ENCODE measurements at regions of chr7 and their contacts with region 1.

Region 1: GRCh38 chr7:123865517-123866117 is 20.6 kb downstream of the HYAL4 start:
- DNase-seq: peak in 1 of 2 donors; percentile 70
- H3K4me3 ChIP-seq: no peak overlapping the region
- H3K27ac ChIP-seq: no peak overlapping the region
- H3K4me1 ChIP-seq: peaks cover 0 to 8% of the 10 kb centered on the region in 2 donors
- H3K27me3 ChIP-seq: no peaks in the 10 kb centered on the region
- CTCF ChIP-seq: peak; percentile 62 to 77 (median 75)

Region 2: DNA sequence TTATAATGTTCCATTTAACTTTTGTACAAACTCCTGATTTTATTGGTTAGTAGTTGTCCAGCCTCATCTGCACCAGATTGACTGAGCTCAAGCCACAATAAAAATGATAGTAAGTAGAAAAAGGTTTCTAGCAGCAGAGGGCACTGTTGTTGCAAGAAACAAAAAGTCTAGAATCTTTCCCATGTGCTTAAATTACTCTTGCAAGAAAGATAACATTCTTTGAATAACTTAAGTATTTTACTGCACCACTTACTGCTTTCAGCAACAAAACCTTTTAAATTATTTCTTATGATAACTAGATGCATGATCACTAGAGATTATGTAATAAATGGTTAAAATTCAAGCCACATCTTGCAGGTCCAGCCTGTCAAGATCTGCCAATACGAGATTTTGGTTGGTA is 182.9 kb before region 1 on chr7:
- intact Hi-C with region 1: loop called (anchors 1 kb)
- DNase-seq: no peak
- H3K4me3 ChIP-seq: no peak overlapping the region
- H3K27ac ChIP-seq: no peak overlapping the region
- H3K4me1 ChIP-seq: no peaks in the 10 kb centered on the region
- H3K27me3 ChIP-seq: no peaks in the 10 kb centered on the region
- CTCF ChIP-seq: peak; percentile 33 to 61 (median 38)

Region 3: GRCh38 chr7:123797673-123798527 is 67.7 kb before region 1 on chr7:
- intact Hi-C with region 1: loop called (anchors 1 kb)
- DNase-seq: no peak
- H3K4me3 ChIP-seq: no peak overlapping the region
- H3K27ac ChIP-seq: no peak overlapping the region
- H3K4me1 ChIP-seq: no peaks in the 10 kb centered on the region
- H3K27me3 ChIP-seq: no peaks in the 10 kb centered on the region
- CTCF ChIP-seq: peak; percentile 10 to 63 (median 56)

Region 4: GRCh38 chr7:123958186-123958703 is 92.6 kb after region 1 on chr7:
- intact Hi-C with region 1: no loop called
- DNase-seq: no peak
- H3K4me3 ChIP-seq: no peak overlapping the region
- H3K27ac ChIP-seq: no peak overlapping the region
- H3K4me1 ChIP-seq: no peaks in the 10 kb centered on the region
- H3K27me3 ChIP-seq: no peaks in the 10 kb centered on the region
- CTCF ChIP-seq: no peak

Region 5: GRCh38 chr7:124042816-124043215 is 177.2 kb after region 1 on chr7:
- intact Hi-C with region 1: no loop called
- DNase-seq: no peak
- H3K4me3 ChIP-seq: no peak overlapping the region
- H3K27ac ChIP-seq: no peak overlapping the region
- H3K4me1 ChIP-seq: no peaks in the 10 kb centered on the region
- H3K27me3 ChIP-seq: no peaks in the 10 kb centered on the region
- CTCF ChIP-seq: no peak